ENCODE measurements at regions of chr13 and their contacts with region 1.

Region 1: GRCh38 chr13:73138643-73139491 is 80.1 kb downstream of the KLF5 start:
- DNase-seq: peak; percentile 63 to 97
- H3K4me3 ChIP-seq: peak overlapping the region; percentile 57; the same call in 1 of the 2 replicates
- H3K27ac ChIP-seq: peak overlapping the region; percentile 100
- H3K4me1 ChIP-seq: peaks cover 74% of the 10 kb centered on the region
- H3K27me3 ChIP-seq: no peaks in the 10 kb centered on the region
- CTCF ChIP-seq: no peak

Region 2: DNA sequence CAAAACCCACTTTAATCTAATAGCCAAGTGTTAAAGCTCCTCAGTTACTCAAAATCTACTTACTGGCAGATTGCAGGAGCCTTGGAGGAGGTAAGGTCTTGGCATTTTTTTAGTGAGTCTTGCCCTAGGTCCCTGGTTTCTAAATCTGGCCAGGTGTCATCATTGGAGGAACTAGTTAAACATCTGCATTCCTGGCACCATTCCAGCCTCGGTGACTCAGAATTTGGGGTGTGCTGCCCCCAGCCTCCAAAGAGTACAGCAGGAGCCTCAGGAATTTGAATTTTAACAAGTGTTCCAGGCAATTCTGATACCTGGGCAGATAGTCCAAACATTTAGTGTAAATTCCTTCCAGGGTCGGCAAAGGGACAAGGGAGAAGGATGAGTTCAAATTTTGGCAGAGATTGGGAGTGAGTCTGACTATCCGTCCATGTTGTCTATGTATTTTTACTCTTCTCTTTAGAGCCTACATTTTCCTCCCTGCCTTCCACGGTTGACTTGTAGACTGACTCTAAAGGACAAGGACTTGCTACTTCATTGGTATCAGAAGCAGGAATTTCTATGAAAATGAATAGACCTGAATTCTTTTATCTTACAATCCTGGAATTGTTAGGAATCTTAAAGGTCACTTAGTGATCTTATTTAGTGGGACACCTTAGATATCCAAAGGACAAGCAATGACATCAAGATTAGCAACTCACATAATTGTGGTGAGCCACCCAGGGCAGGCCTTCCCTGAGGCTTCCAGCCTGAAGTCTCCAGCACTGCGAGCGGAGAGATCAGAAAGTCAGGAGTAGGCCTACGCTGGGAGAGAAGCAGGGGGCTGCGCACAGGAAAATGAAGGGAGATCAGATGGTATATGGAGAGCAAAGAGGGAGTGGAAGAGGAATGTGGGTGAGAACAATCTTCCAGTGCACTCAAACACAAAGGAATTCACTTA is 42.4 kb before region 1 on chr13:
- CTCF ChIA-PET with region 1: no interaction called
- POLR2A ChIA-PET with region 1: no interaction called
- intact Hi-C with region 1: loop called (anchors 2 kb)
- DNase-seq: peak; percentile 91 to 92
- H3K4me3 ChIP-seq: no peak overlapping the region
- H3K27ac ChIP-seq: peak overlapping the region; percentile 85
- H3K4me1 ChIP-seq: peaks cover 30% of the 10 kb centered on the region
- H3K27me3 ChIP-seq: no peaks in the 10 kb centered on the region
- CTCF ChIP-seq: no peak

Region 3: GRCh38 chr13:73198991-73199411 is 60.1 kb after region 1 on chr13:
- CTCF ChIA-PET with region 1: interaction called, 3 read pairs
- POLR2A ChIA-PET with region 1: no interaction called
- intact Hi-C with region 1: loop called (anchors 2 kb)
- DNase-seq: peak in 1 of 2 experiments; percentile 39
- H3K4me3 ChIP-seq: no peak overlapping the region
- H3K27ac ChIP-seq: no peak overlapping the region
- H3K4me1 ChIP-seq: peaks cover 16% of the 10 kb centered on the region
- H3K27me3 ChIP-seq: no peaks in the 10 kb centered on the region
- CTCF ChIP-seq: no peak

Region 4: DNA sequence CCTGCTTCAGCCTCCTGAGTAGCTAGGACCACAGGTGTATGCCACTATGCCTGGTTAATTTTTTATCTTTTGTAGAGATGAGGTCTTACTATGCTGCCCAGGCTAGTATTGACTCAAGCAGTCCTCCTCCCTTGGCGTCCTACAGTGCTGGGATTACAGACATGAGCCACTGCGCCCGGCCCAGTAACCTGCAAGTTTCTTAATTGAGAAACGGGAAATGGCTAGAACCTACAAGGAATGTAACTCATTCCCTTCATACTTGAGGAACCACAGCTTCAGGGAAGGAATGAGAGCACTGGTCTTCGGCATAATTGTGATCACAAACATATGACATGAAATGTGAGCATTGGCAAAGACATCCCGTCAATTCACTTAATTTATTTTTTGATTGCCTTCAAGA is 76.9 kb after region 1 on chr13:
- CTCF ChIA-PET with region 1: no interaction called
- POLR2A ChIA-PET with region 1: interaction called, 9 read pairs
- intact Hi-C with region 1: loop called (anchors 1 kb)
- DNase-seq: peak in 1 of 2 experiments; percentile 36
- H3K4me3 ChIP-seq: no peak overlapping the region
- H3K27ac ChIP-seq: no peak overlapping the region
- H3K4me1 ChIP-seq: peaks cover 15% of the 10 kb centered on the region
- H3K27me3 ChIP-seq: no peaks in the 10 kb centered on the region
- CTCF ChIP-seq: no peak

Region 5: GRCh38 chr13:73248711-73249578 is 110.1 kb after region 1 on chr13:
- CTCF ChIA-PET with region 1: no interaction called
- POLR2A ChIA-PET with region 1: interaction called, 10 read pairs
- intact Hi-C with region 1: loop called (anchors 10 kb)
- DNase-seq: peak; percentile 60 to 89
- H3K4me3 ChIP-seq: peak overlapping the region; percentile 3; the same call in 1 of the 2 replicates
- H3K27ac ChIP-seq: peak overlapping the region; percentile 71
- H3K4me1 ChIP-seq: peaks cover 22% of the 10 kb centered on the region
- H3K27me3 ChIP-seq: no peaks in the 10 kb centered on the region
- CTCF ChIP-seq: no peak

Region 6: GRCh38 chr13:73335221-73335620 is 196.4 kb after region 1 on chr13:
- CTCF ChIA-PET with region 1: no interaction called
- POLR2A ChIA-PET with region 1: no interaction called
- intact Hi-C with region 1: loop called (anchors 2 kb)
- DNase-seq: peak in 1 of 2 experiments; percentile 96
- H3K4me3 ChIP-seq: no peak overlapping the region
- H3K27ac ChIP-seq: peak overlapping the region; percentile 99
- H3K4me1 ChIP-seq: peaks cover 44% of the 10 kb centered on the region
- H3K27me3 ChIP-seq: no peaks in the 10 kb centered on the region
- CTCF ChIP-seq: no peak

Measured in PC-9 (cell line).